A673 (cell line): ENCODE measurements at regions of chr10 and their contacts with region 1.

Region 1: DNA sequence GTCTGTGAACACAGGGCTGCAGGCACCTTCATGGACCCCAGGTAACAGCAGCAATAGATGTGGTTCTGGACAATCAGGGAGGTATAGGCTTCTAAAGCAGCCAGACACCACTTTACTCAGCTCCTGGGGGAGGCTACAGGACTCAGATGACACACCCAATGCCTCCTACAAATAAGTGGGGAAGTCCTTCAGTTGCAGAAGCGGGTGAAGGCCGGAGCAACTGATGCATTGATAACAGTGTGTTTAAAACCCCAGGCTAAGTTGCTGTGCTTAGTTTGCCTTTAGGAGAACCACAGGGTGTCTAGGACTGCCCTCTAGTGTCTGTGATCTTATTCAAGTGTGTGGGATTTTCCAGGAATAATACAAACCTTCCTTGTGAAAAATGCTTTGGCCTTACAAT is 5.9 kb upstream of the ITGA8 start:
- DNase-seq: peak; percentile 70
- H3K4me3 ChIP-seq: no peak overlapping the region
- H3K27ac ChIP-seq: no peak overlapping the region
- H3K4me1 ChIP-seq: no peaks in the 10 kb centered on the region
- H3K27me3 ChIP-seq: peaks cover 37% of the 10 kb centered on the region
- CTCF ChIP-seq: peak; percentile 68

Region 2: GRCh38 chr10:15585303-15585715 is 140.3 kb before region 1 on chr10:
- CTCF ChIA-PET with region 1: interaction called, 4 read pairs
- POLR2A ChIA-PET with region 1: no interaction called
- intact Hi-C with region 1: loop called (anchors 2 kb)
- DNase-seq: peak; percentile 87
- H3K4me3 ChIP-seq: no peak overlapping the region
- H3K27ac ChIP-seq: no peak overlapping the region
- H3K4me1 ChIP-seq: no peaks in the 10 kb centered on the region
- H3K27me3 ChIP-seq: peaks cover 2% of the 10 kb centered on the region
- CTCF ChIP-seq: peak; percentile 90

Region 3: DNA sequence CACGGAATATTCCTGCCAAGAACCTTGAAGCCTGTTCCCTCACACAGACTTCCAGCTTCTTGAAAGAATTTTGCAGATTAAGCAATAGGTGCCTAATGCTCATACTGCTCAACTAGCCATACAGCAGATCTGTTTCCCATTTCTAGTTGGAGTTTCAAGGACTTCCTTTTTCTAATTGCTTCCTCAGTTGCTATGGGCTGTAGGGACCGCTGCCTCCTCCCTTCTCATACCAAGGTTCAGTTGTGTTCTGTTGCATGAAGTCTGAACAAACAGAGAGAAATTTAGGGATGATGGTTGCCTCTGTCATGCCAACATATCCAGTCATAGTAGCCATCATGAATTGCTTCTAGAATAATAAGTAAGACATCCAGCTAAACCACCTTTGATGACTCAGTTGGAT is 12.7 kb before region 1 on chr10:
- CTCF ChIA-PET with region 1: interaction called, 21 read pairs
- POLR2A ChIA-PET with region 1: no interaction called
- intact Hi-C with region 1: no loop called
- DNase-seq: no peak
- H3K4me3 ChIP-seq: no peak overlapping the region
- H3K27ac ChIP-seq: no peak overlapping the region
- H3K4me1 ChIP-seq: no peaks in the 10 kb centered on the region
- H3K27me3 ChIP-seq: peaks cover 31% of the 10 kb centered on the region
- CTCF ChIP-seq: no peak

Region 4: GRCh38 chr10:15824498-15824897 is 98.9 kb after region 1 on chr10:
- CTCF ChIA-PET with region 1: interaction called, 8 read pairs
- POLR2A ChIA-PET with region 1: no interaction called
- intact Hi-C with region 1: loop called (anchors 10 kb)
- DNase-seq: peak; percentile 12
- H3K4me3 ChIP-seq: no peak overlapping the region
- H3K27ac ChIP-seq: no peak overlapping the region
- H3K4me1 ChIP-seq: no peaks in the 10 kb centered on the region
- H3K27me3 ChIP-seq: no peaks in the 10 kb centered on the region
- CTCF ChIP-seq: peak; percentile 63